A673 (cell line): ENCODE measurements at regions of chr6 and their contacts with region 1.

Region 1: GRCh38 chr6:24520929-24521546 is 26.3 kb downstream of the ALDH5A1 start:
- DNase-seq: peak; percentile 62
- H3K4me3 ChIP-seq: no peak overlapping the region
- H3K27ac ChIP-seq: no peak overlapping the region
- H3K4me1 ChIP-seq: no peaks in the 10 kb centered on the region
- H3K27me3 ChIP-seq: peaks cover 4% of the 10 kb centered on the region
- CTCF ChIP-seq: peak; percentile 81

Region 2: GRCh38 chr6:24064082-24064481 is 457.0 kb before region 1 on chr6:
- CTCF ChIA-PET with region 1: no interaction called
- POLR2A ChIA-PET with region 1: no interaction called
- intact Hi-C with region 1: loop called (anchors 10 kb)
- DNase-seq: peak; percentile 70
- H3K4me3 ChIP-seq: no peak overlapping the region
- H3K27ac ChIP-seq: no peak overlapping the region
- H3K4me1 ChIP-seq: peaks cover 9% of the 10 kb centered on the region
- H3K27me3 ChIP-seq: no peaks in the 10 kb centered on the region
- CTCF ChIP-seq: peak; percentile 73

Region 3: GRCh38 chr6:24581084-24581669 is 60.1 kb after region 1 on chr6:
- CTCF ChIA-PET with region 1: interaction called, 3 read pairs
- POLR2A ChIA-PET with region 1: no interaction called
- intact Hi-C with region 1: loop called (anchors 5 kb)
- DNase-seq: peak; percentile 80
- H3K4me3 ChIP-seq: no peak overlapping the region
- H3K27ac ChIP-seq: no peak overlapping the region
- H3K4me1 ChIP-seq: peaks cover 17% of the 10 kb centered on the region
- H3K27me3 ChIP-seq: peaks cover 20% of the 10 kb centered on the region
- CTCF ChIP-seq: peak; percentile 90

Region 4: DNA sequence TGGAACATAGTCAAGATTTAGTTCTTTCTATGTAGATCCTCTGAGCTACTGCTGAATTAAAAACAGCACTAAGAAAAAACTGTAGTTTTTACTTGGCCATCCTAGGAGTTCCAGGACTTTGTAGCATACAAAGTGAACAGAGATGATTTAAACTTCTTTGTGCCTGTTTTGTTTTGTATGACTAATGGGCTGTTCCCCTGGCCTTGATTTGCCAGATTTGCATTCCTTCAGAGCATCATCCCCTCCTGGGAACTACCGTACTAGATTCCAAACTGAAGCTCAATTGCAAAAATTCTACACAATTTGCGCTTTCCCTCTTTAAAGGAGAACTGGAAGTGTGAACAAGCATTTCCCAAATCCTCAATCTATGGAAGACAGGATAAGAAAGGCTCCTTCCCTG is 168.9 kb after region 1 on chr6:
- CTCF ChIA-PET with region 1: no interaction called
- POLR2A ChIA-PET with region 1: no interaction called
- intact Hi-C with region 1: loop called (anchors 2 kb)
- DNase-seq: no peak
- H3K4me3 ChIP-seq: no peak overlapping the region
- H3K27ac ChIP-seq: no peak overlapping the region
- H3K4me1 ChIP-seq: no peaks in the 10 kb centered on the region
- H3K27me3 ChIP-seq: no peaks in the 10 kb centered on the region
- CTCF ChIP-seq: no peak

Region 5: GRCh38 chr6:24702720-24703282 is 181.8 kb after region 1 on chr6:
- CTCF ChIA-PET with region 1: no interaction called
- POLR2A ChIA-PET with region 1: no interaction called
- intact Hi-C with region 1: no loop called
- DNase-seq: no peak
- H3K4me3 ChIP-seq: no peak overlapping the region
- H3K27ac ChIP-seq: no peak overlapping the region
- H3K4me1 ChIP-seq: no peaks in the 10 kb centered on the region
- H3K27me3 ChIP-seq: no peaks in the 10 kb centered on the region
- CTCF ChIP-seq: no peak

Region 6: DNA sequence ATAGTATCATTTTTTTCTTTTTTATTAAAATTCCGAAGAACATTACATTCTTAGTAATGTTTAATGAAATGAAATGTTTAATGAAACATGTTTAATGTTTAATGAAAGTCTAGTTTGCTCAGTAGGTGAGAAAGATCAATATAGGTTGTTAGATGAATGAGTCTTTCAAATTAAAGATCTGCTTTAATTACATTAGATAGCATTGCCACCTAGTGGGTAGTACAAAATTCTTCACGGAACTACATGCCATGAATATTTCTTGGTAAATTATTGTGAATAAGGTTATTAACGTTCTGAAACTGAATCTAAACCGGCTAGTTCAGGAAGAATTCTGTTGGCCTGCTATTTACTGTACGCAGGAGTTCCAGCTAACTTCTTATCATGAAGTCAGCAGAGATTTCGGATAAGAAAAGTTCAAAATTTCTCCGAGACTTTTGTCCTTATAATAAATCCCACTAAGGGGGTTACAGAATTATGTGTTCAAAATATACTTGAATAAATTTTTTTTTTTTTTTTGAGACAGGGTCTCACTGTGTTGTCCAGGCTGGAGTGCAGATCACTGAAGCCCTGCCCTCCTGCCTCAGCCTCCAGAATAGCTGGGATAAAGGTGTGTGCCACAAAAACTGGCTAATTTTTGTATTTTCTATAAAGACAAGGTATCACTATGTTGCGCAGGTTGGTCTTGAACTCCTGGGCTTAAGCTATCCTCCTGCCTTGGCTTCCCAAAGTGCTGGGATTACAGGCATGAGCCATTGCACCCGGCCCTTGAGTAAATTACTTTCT is 245.8 kb after region 1 on chr6:
- CTCF ChIA-PET with region 1: no interaction called
- POLR2A ChIA-PET with region 1: no interaction called
- intact Hi-C with region 1: loop called (anchors 2 kb)
- DNase-seq: peak; percentile 42
- H3K4me3 ChIP-seq: no peak overlapping the region
- H3K27ac ChIP-seq: no peak overlapping the region
- H3K4me1 ChIP-seq: no peaks in the 10 kb centered on the region
- H3K27me3 ChIP-seq: no peaks in the 10 kb centered on the region
- CTCF ChIP-seq: peak; percentile 60

Region 7: DNA sequence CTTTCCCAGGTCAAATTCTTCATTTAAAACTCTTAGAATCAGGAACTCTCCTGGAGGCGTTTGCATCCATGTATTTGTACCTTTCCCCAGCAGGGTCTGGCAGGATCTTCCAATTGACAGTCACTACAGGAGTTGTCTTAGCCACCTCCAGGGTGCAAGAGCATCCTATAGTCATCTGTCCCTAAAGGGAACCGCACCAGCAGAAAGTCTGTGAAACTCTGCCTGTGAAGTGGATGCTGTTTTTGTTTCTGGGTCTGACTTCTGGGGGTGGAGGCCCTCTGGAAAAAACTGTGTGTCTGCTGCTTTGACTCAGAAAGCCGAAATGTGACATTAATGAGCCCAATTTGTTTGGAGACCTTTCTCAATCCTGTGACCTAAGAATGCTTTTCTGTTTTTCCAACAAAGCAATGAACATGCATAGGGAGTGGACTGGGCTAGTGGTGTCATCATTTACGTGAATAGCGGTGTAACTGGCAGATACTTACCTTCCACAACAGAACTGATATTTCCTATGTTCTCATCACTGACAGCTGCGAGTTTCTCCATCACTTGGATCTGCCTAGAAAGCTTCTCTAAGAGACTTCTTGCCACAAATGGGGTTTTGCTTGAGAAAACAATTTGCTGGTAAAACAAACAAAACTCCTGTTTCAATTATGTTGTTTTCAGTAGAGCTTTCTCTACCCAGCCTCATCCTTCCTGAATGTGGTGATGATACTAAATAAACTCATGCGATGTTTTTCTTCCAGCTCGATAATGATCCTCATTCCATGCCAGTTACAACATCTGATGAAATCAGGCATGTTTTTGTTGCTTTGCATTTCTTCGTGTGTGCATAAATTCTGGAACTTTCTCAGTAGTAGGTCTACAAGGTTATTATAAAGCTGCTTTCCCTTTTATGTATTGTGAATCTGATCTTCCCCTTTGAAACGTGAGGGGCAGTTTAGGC is 311.0 kb after region 1 on chr6:
- CTCF ChIA-PET with region 1: interaction called, 10 read pairs
- POLR2A ChIA-PET with region 1: no interaction called
- intact Hi-C with region 1: no loop called
- DNase-seq: no peak
- H3K4me3 ChIP-seq: no peak overlapping the region
- H3K27ac ChIP-seq: no peak overlapping the region
- H3K4me1 ChIP-seq: peaks cover 3% of the 10 kb centered on the region
- H3K27me3 ChIP-seq: no peaks in the 10 kb centered on the region
- CTCF ChIP-seq: no peak